ENCODE measurements at regions of chr4 and their contacts with region 1.

Region 1: DNA sequence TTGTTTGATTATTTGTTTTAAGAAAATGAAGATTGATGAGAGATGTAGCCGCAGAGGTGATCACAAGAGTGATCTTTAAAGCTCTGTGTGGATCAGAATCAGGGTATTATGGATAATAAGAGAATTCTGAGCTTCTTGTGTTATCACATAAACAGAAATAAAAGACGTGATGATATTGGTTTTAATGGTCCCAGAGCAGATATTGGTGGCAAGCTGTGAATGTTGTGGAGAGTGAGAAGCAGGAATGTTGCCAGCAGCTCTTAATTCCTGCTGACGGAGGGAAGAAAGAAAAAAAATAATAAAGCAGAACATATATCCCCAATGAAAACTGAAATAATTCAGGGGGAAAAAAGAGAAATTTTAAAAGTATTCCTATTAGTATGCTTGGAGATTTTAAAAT is 1015.9 kb downstream of the PCDH18 start:
- DNase-seq: no peak
- ATAC-seq: no peak

Region 2: DNA sequence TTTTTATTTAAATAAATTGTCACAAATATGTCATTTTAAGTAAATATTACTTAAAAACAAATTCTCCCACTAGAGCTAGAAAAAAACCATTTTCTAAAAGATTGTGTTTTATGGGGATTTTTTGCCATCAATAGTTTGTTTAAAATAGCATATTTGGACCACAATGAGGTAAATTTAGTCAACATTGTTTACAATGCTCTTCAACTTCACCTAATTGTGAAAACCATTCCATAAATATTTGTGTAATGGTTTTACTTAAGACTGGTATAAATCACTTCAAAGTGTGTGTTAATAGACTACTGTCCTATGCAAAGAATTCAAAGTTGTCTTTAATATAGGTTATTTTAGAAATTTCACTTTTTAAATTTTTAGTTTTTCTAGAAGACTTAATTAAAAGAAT is 11.8 kb after region 1 on chr4:
- intact Hi-C with region 1: loop called (anchors 1 kb)
- DNase-seq: no peak
- ATAC-seq: no peak

Measured in left ventricle myocardium superior (tissue), 1 donor.